Posterior cingulate gyrus (tissue), 11 donors: ENCODE measurements at regions of chr19 and their contacts with region 1.

Region 1: GRCh38 chr19:18588611-18589379 is at the start of gene REX1BD:
- DNase-seq: peak; percentile 70 to 97 (median 79)

Region 2: DNA sequence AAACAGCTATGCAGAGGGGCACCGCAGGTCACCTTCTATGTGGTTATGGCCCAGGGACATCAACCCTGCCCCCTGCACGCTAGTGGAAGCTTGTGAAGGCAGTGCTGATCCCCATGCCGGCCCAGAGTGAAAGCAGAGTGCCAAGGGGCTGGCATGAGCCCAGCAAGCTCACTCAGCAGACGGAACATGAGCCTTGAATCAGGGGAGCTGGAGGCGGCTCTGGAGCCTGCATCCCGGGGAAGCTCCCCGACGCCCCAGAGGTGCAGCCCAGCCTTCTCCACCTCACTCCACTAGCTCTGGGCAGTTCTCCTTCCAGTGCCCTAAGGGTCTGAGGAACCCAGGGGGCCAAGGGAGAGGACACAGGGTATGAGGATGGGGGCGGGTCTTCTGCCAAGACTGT is 131.8 kb before region 1 on chr19:
- intact Hi-C with region 1: loop called (anchors 5 kb)
- DNase-seq: peak in 9 of 10 donors; percentile 59 to 96 (median 74)

Region 3: GRCh38 chr19:18713550-18714117 is 124.8 kb after region 1 on chr19:
- intact Hi-C with region 1: no loop called
- DNase-seq: no peak

Region 4: DNA sequence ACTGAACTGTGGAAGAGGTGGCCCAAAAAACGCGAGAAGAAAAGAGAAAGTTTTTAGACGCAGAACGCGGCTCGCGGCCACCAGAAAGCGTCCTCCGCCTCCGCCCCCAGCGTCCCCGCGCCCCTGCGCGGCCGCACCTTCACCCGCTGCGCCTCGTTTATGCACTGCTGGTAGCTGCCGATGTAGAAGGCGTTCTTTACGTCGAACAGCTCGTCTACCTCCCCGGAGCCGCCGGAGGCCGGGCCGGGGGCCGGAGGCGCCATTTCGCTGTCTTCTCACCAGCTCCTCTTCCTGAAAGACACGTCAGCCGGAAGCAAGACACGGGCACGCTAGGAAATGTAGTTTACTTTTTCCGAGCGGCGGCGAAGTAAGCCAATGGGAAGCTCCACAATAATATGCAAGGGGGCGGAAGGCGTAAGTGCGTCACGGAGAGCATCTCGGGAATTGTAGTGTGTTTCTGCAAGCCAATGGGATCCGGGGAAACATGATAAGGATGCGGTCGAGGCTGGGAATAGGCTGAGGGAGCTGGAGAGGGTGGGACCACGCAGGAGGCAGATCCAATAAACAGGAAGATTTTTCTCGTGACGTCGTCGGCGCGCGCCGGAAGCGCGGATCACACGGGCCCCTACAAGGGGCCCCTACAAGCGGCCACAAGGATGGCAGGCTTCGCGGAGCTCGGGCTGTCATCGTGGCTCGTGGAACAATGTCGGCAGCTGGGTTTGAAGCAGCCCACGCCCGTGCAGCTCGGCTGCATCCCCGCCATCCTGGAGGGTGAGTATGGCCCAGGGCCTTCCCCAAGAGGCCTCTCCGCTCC is 330.5 kb after region 1 on chr19 and contains the starts of genes COPE and DDX49:
- intact Hi-C with region 1: loop called (anchors 5 kb)
- DNase-seq: peak; percentile 94 to 100 (median 98)